ENCODE measurements at regions of chr2 and their contacts with region 1.

Region 1: DNA sequence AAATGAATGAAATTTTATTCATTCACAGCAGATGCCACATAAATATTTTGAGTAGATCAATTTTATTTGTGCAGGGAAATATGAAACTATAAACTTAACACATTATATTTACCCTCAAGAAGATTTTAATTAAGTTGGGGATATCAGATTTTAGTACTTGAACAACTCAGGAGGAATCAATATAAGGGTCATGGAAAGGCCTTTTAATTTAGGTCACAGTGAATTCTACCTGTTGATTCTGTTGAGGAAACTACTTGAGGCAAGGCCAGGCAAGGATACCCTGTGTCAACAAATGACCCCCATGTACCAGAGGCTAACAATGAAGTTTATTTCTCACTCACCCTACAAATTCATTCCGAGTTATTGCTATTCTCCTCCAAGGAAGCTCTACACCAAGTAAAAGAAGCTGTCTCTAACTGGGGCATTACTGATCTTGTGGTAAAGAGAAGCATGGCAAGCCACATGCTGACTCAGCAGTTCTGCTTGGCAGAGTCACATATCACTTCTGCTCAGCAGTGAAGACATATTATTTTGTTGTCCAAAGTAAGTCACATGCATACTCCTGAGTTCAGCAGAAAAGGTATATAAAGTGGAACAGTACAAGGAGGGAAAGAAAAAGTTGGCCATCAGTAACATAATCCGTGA is 315.7 kb downstream of the GULP1 start:
- DNase-seq: no peak
- H3K4me3 ChIP-seq: no peak overlapping the region
- H3K27ac ChIP-seq: no peak overlapping the region
- H3K4me1 ChIP-seq: peaks cover 0 to 7% (median 0%) of the 10 kb centered on the region in 4 donors
- H3K27me3 ChIP-seq: no peaks in the 10 kb centered on the region
- CTCF ChIP-seq: no peak
- EP300 ChIP-seq: no peak
- POLR2A ChIP-seq: no peak

Region 2: DNA sequence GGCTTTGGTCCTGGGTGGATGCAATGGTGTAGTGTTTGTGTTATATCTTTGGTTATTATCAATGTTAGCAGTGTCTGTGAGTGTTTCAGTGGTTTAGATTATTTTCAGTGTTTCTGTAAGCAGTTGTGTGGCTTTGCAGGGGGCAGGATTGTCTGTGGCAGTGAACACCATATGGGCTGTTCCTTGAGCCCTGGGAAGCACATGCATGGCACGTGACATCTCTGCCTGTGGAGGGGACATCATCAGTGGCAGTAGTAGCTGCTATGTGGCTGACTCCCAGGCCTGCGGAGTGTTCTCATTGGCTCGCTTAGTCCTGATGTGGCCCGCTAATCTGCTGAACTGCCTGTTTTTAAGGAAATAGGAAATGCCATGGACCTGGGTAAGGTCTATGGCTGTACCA is 11.8 kb after region 1 on chr2:
- in situ Hi-C with region 1: no loop called
- intact Hi-C with region 1: loop called (anchors 1 kb)
- DNase-seq: no peak
- H3K4me3 ChIP-seq: no peak overlapping the region
- H3K27ac ChIP-seq: no peak overlapping the region
- H3K4me1 ChIP-seq: peaks cover 0 to 1% (median 0%) of the 10 kb centered on the region in 4 donors
- H3K27me3 ChIP-seq: no peaks in the 10 kb centered on the region
- CTCF ChIP-seq: no peak
- EP300 ChIP-seq: no peak
- POLR2A ChIP-seq: no peak

Measured in transverse colon (tissue), 4 donors.